Vagina (tissue), 2 donors: ENCODE measurements at regions of chr13 and their contacts with region 1.

Region 1: GRCh38 chr13:45662162-45662561 is 40.0 kb upstream of the CBY2 start:
- DNase-seq: no peak
- H3K4me3 ChIP-seq: no peak overlapping the region
- H3K27ac ChIP-seq: no peak overlapping the region
- H3K4me1 ChIP-seq: no peaks in the 10 kb centered on the region
- H3K27me3 ChIP-seq: no peaks in the 10 kb centered on the region
- CTCF ChIP-seq: no peak
- POLR2A ChIP-seq: no peak

Region 2: GRCh38 chr13:45838171-45838745 is 176.1 kb after region 1 on chr13:
- intact Hi-C with region 1: loop called (anchors 5 kb)
- DNase-seq: no peak
- H3K4me3 ChIP-seq: no peak overlapping the region
- H3K27ac ChIP-seq: no peak overlapping the region
- H3K4me1 ChIP-seq: peaks cover 15% of the 10 kb centered on the region
- H3K27me3 ChIP-seq: no peaks in the 10 kb centered on the region
- CTCF ChIP-seq: no peak
- POLR2A ChIP-seq: no peak

Region 3: DNA sequence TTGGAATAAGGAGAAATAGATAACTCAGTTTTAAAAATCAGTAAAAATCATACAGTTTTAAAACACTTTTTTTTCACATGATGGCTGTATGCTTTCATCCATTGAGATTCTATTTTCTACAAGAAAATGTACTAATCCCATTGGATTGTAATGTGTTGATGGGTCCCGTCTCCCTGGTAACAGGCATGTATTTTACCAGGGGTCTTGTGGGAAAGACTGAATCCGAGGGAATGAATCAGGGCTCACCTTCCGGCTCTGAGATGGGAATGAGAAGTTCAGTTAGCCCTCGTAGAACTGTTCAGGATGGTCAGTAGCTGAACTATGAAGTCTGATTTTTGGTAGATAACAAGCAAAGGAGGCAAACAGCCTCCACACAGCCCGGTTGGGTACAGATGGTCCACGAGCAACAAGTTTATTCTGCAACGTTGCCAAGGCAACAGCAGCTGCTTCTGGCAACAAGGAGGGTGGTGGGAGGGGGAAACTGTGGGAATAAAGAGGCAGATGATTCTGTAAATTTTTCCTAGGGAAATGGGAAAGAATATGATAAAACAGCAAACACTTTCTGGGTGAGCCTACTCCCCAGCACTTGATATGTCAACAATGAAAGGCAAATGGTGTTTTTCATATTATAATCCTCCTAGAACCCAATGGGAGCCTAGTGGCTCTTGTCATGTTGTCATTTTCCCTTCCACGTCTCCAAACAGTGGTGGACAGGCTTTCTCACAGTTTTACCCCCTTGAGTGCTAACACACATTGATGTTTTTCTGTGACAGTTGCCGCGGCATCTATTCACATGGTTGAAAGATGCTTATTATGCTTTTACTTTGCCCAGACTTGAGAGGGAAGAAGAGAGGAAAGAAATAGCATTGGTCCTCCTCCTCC is 201.8 kb after region 1 on chr13:
- intact Hi-C with region 1: no loop called
- DNase-seq: no peak
- H3K4me3 ChIP-seq: no peak overlapping the region
- H3K27ac ChIP-seq: no peak overlapping the region
- H3K4me1 ChIP-seq: no peaks in the 10 kb centered on the region
- H3K27me3 ChIP-seq: no peaks in the 10 kb centered on the region
- CTCF ChIP-seq: no peak
- POLR2A ChIP-seq: no peak